SK-N-SH (cell line): ENCODE measurements at regions of chr19 and their contacts with region 1.

Region 1: GRCh38 chr19:14689598-14690503 is at the start of gene ZNF333:
- DNase-seq: peak; percentile 99
- H3K4me3 ChIP-seq: peak within 1 kb of the TSS; percentile 78 to 93
- H3K27ac ChIP-seq: peak within 1 kb of the TSS; percentile 91 to 96
- H3K4me1 ChIP-seq: peaks cover 0 to 7% of the 10 kb centered on the region in 2 experiments; a peak in 3 of 4 replicates
- H3K27me3 ChIP-seq: no peaks in the 10 kb centered on the region
- CTCF ChIP-seq: no peak
- EP300 ChIP-seq: no peak
- RAD21 ChIP-seq: no peak
- polyA plus RNA-seq, gene ZNF333: 15.2 and 19.6 TPM in 2 replicates

Region 2: GRCh38 chr19:14571695-14572490 is 118.0 kb before region 1 on chr19 and contains the start of gene NDUFB7:
- CTCF ChIA-PET with region 1: interaction called, 123 read pairs
- POLR2A ChIA-PET with region 1: interaction called, 15 read pairs
- DNase-seq: peak; percentile 93
- H3K4me3 ChIP-seq: peak within 1 kb of the TSS; percentile 79 to 100
- H3K27ac ChIP-seq: peak within 1 kb of the TSS in 1 of 2 experiments; percentile 76; a peak in 1 of 4 replicates
- H3K4me1 ChIP-seq: peaks cover 0 to 8% of the 10 kb centered on the region in 2 experiments; a peak in 2 of 4 replicates
- H3K27me3 ChIP-seq: no peaks in the 10 kb centered on the region
- CTCF ChIP-seq: peak; percentile 78
- EP300 ChIP-seq: peak in 1 of 2 experiments; percentile 37; a peak in 3 of 4 replicates
- RAD21 ChIP-seq: no peak
- polyA plus RNA-seq, gene NDUFB7: 458 and 465 TPM in 2 replicates

Region 3: DNA sequence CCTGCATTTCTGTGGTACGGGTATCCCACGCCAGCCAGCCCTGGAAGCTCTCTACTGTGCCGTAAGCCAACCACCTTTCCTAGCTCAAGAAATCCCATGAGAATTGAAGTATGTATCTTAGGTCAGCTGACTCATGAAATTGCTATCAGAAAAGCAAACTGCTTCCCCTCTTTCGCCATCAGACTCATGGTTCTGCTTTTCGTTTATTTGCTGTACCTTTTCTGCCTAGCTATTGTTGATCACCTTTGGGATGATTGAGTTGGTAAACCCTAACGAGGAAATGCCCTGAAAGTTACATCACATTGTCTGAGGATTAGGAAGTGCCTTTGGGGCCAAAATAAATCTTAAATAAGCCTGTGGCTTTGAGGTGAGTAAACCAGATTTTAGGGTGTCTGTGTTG is 15.1 kb before region 1 on chr19 and contains the start of gene ADGRE3:
- CTCF ChIA-PET with region 1: interaction called, 21 read pairs
- POLR2A ChIA-PET with region 1: interaction called, 3 read pairs
- DNase-seq: no peak
- H3K4me3 ChIP-seq: no peak within 1 kb of the TSS
- H3K27ac ChIP-seq: no peak within 1 kb of the TSS
- H3K4me1 ChIP-seq: no peaks in the 10 kb centered on the region
- H3K27me3 ChIP-seq: peaks cover 51% of the 10 kb centered on the region; the same call in 1 of the 2 replicates
- CTCF ChIP-seq: no peak
- EP300 ChIP-seq: no peak
- RAD21 ChIP-seq: no peak
- polyA plus RNA-seq, gene ADGRE3: not detected in 2 replicates